Aorta (tissue), 5 donors: ENCODE measurements at regions of chr18 and their contacts with region 1.

Region 1: GRCh38 chr18:66495844-66496243 is 108.0 kb downstream of the CDH19 start:
- DNase-seq: no peak
- ATAC-seq: no peak
- H3K4me3 ChIP-seq: no peak overlapping the region
- H3K27ac ChIP-seq: no peak overlapping the region
- H3K4me1 ChIP-seq: no peaks in the 10 kb centered on the region
- H3K27me3 ChIP-seq: no peaks in the 10 kb centered on the region

Region 2: DNA sequence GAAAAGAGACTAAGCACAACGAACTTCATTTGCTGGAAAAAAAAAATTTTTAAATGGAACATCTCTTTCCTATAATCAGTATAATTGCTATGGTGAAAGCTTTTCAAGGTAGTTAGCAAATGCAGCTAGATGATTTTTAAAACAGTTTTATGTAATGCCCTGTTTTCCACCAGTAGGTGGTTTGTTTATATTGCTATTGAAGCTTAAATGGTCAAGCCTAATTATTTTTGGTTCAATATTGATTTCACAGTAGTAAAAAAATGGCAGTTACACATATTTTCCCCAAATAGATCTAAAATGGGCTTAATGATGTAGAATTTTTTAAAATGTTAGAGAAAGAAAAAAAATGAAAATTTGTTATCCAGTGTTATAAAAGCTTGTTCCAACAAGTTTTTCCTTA is 37.8 kb after region 1 on chr18:
- intact Hi-C with region 1: loop called in 1 of 2 experiments (anchors 2 kb)
- DNase-seq: no peak
- ATAC-seq: no peak
- H3K4me3 ChIP-seq: no peak overlapping the region
- H3K27ac ChIP-seq: no peak overlapping the region
- H3K4me1 ChIP-seq: no peaks in the 10 kb centered on the region
- H3K27me3 ChIP-seq: no peaks in the 10 kb centered on the region

Region 3: GRCh38 chr18:66560092-66560491 is 64.2 kb after region 1 on chr18:
- intact Hi-C with region 1: no loop called
- DNase-seq: no peak
- ATAC-seq: no peak
- H3K4me3 ChIP-seq: no peak overlapping the region
- H3K27ac ChIP-seq: no peak overlapping the region
- H3K4me1 ChIP-seq: no peaks in the 10 kb centered on the region
- H3K27me3 ChIP-seq: no peaks in the 10 kb centered on the region